Activated CD4-positive, alpha-beta T cell treated with anti-CD3 and anti-CD28 coated beads for 36 hours (primary cell): ENCODE measurements at regions of chr20 and their contacts with region 1.

Region 1: DNA sequence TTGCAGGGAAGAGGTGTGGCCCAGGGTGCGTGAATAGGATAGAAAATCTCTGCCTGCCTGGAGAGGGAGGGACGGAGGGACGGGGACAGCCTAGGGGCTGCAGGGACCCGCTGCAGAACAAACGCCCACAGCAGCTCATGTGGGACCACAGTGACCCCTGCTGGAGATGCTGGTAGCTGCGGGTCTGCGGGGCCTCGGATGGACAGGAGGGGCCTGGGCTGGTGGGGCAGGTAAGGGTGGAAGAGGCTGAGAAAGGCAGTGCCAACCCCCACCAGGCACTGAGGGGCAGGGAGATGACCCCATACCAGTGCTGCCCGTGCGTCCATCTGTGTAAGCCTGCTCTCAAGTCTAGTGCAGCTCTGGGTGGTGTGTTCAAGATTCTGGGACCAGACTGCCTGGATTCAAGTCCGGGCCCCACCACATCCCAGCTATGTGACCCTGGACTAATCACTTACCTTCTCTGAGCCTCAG is 39.4 kb downstream of the KIAA1755 start:
- DNase-seq: peak; percentile 83
- ATAC-seq: peak; percentile 83
- H3K4me3 Mint-ChIP-seq: no peak overlapping the region
- H3K27ac Mint-ChIP-seq: no peak overlapping the region
- H3K4me1 Mint-ChIP-seq: no peaks in the 10 kb centered on the region
- H3K27me3 Mint-ChIP-seq: peaks cover 2% of the 10 kb centered on the region

Region 2: GRCh38 chr20:37651932-37652331 is 569.2 kb before region 1 on chr20:
- CTCF ChIA-PET with region 1: interaction called, 4 read pairs
- POLR2A ChIA-PET with region 1: no interaction called
- intact Hi-C with region 1: loop called in 1 of 2 experiments (anchors 1 kb)
- DNase-seq: peak; percentile 70
- ATAC-seq: peak; percentile 94
- H3K4me3 Mint-ChIP-seq: no peak overlapping the region
- H3K27ac Mint-ChIP-seq: no peak overlapping the region
- H3K4me1 Mint-ChIP-seq: no peaks in the 10 kb centered on the region
- H3K27me3 Mint-ChIP-seq: peaks cover 9% of the 10 kb centered on the region

Region 3: GRCh38 chr20:38057351-38057972 is 163.7 kb before region 1 on chr20:
- CTCF ChIA-PET with region 1: interaction called, 27 read pairs
- POLR2A ChIA-PET with region 1: no interaction called
- intact Hi-C with region 1: loop called (anchors 1 to 2 kb)
- DNase-seq: peak; percentile 87
- ATAC-seq: peak; percentile 92
- H3K4me3 Mint-ChIP-seq: peak overlapping the region; percentile 29
- H3K27ac Mint-ChIP-seq: peak overlapping the region; percentile 86
- H3K4me1 Mint-ChIP-seq: peaks cover 34% of the 10 kb centered on the region
- H3K27me3 Mint-ChIP-seq: no peaks in the 10 kb centered on the region

Region 4: DNA sequence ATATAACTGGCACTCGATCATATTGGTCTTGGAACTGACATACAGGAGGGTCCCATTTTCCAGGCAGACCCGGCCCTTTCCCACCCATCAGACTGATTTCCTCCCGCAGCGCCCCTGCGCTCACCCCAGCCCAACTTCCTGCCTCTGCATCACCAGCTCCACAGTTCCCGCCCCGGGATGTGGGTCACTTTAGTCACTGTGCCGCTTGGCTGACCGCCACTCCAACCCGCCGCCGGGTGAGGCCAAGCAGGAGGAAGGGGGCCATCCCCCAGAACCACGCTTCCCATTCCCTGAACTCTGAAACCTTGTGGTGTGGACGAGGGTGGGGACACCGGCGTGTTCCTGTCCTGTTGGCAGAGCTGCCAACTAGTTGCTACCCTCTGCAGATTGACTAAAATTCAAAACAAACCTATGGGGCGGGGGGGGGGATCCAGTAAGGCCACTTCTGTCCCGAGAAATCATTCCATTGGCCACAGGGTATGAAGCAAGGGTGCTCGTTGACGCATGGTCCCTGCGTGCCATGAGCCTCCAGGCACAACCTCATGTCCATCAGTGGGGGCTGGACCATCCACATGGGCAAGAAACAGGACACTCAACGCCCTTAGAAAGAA is 68.4 kb before region 1 on chr20:
- CTCF ChIA-PET with region 1: interaction called, 10 read pairs
- POLR2A ChIA-PET with region 1: no interaction called
- intact Hi-C with region 1: no loop called
- DNase-seq: peak; percentile 55
- ATAC-seq: peak; percentile 77
- H3K4me3 Mint-ChIP-seq: peak overlapping the region; percentile 24
- H3K27ac Mint-ChIP-seq: peak overlapping the region; percentile 63
- H3K4me1 Mint-ChIP-seq: peaks cover 10% of the 10 kb centered on the region
- H3K27me3 Mint-ChIP-seq: peaks cover 3% of the 10 kb centered on the region

Region 5: DNA sequence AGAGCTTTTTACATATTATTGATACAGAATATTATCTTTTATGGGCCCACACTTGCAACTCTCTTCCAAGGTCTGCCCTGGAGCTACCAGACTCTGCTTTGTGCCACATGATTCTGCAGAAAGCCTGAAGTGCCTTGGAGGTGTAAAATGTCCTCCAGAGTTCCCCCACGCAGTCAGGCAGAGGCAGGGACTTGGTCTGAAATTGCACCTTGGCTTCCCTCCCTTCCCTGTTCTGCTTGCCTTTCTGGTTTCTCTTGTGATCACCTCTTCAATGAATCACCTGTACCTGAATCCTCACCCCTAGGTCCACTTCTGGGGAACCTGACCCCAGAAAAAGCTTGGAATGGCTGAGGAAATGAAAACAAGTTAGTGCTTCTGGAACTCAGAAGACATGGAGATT is 13.1 kb before region 1 on chr20:
- CTCF ChIA-PET with region 1: interaction called, 27 read pairs
- POLR2A ChIA-PET with region 1: no interaction called
- intact Hi-C with region 1: no loop called
- DNase-seq: no peak
- ATAC-seq: no peak
- H3K4me3 Mint-ChIP-seq: no peak overlapping the region
- H3K27ac Mint-ChIP-seq: no peak overlapping the region
- H3K4me1 Mint-ChIP-seq: no peaks in the 10 kb centered on the region
- H3K27me3 Mint-ChIP-seq: peaks cover 6% of the 10 kb centered on the region

Region 6: GRCh38 chr20:38321959-38322598 is 100.9 kb after region 1 on chr20:
- CTCF ChIA-PET with region 1: no interaction called
- POLR2A ChIA-PET with region 1: no interaction called
- intact Hi-C with region 1: no loop called
- DNase-seq: peak; percentile 25
- ATAC-seq: no peak
- H3K4me3 Mint-ChIP-seq: no peak overlapping the region
- H3K27ac Mint-ChIP-seq: no peak overlapping the region
- H3K4me1 Mint-ChIP-seq: no peaks in the 10 kb centered on the region
- H3K27me3 Mint-ChIP-seq: peaks cover 18% of the 10 kb centered on the region